MCF 10A (cell line): ENCODE measurements at regions of chr19 and their contacts with region 1.

Region 1: DNA sequence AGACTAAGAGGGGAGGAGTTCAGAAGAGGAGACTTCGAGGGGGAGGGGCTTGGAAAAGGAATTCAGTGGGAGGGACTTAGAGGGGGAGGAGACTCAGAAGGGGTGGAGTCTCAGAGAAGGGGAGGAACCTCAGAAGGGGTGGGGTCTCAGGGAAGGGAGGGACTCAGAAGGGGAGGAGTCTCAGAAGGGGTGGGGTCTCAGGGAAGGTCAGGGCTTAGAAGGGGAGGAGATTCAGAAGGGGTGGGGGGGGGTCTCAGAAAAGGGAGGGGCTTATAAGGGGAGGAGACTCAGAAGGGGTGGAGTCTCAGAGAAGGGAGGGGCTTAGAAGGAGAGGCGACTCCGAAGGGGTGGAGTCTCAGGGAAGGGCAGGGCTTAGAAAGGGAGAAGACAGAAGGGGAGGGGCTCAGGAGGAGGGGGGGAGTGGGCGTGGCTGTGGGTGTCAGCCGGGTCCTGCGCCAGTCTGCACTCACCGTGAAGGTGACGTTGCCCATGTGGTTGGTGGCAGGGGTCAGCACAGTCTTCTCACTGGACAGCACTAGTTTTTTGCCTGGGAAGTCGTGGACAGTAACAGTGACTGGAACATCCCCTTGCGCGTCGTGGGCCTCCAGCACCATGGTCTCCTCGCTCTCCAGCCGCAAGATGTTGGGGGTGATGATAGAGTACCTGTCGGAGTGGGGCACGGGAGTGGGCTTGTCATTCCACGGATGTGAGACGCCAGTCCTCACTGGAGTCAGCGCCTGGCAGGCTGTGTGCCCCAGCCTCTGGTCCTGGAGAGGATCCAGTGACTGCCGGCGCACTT is 1.5 kb downstream of the C3 start:
- DNase-seq: peak; percentile 92
- H3K4me3 Mint-ChIP-seq: peak overlapping the region; percentile 95
- H3K27ac Mint-ChIP-seq: peak overlapping the region; percentile 82
- H3K4me1 Mint-ChIP-seq: peaks cover 47% of the 10 kb centered on the region
- H3K27me3 Mint-ChIP-seq: no peaks in the 10 kb centered on the region
- CTCF ChIP-seq: no peak

Region 2: GRCh38 chr19:6593651-6594416 is 125.1 kb before region 1 on chr19:
- CTCF ChIA-PET with region 1: no interaction called
- POLR2A ChIA-PET with region 1: no interaction called
- intact Hi-C with region 1: no loop called
- DNase-seq: no peak
- H3K4me3 Mint-ChIP-seq: no peak overlapping the region
- H3K27ac Mint-ChIP-seq: no peak overlapping the region
- H3K4me1 Mint-ChIP-seq: peaks cover 19% of the 10 kb centered on the region
- H3K27me3 Mint-ChIP-seq: no peaks in the 10 kb centered on the region
- CTCF ChIP-seq: no peak

Region 3: GRCh38 chr19:6705931-6706632 is 12.9 kb before region 1 on chr19:
- CTCF ChIA-PET with region 1: no interaction called
- POLR2A ChIA-PET with region 1: interaction called, 10 read pairs
- intact Hi-C with region 1: no loop called
- DNase-seq: no peak
- H3K4me3 Mint-ChIP-seq: no peak overlapping the region
- H3K27ac Mint-ChIP-seq: peak overlapping the region; percentile 57
- H3K4me1 Mint-ChIP-seq: peaks cover 18% of the 10 kb centered on the region
- H3K27me3 Mint-ChIP-seq: no peaks in the 10 kb centered on the region
- CTCF ChIP-seq: no peak

Region 4: GRCh38 chr19:6737284-6738046 is 18.5 kb after region 1 on chr19 and contains the start of gene GPR108:
- CTCF ChIA-PET with region 1: interaction called, 9 read pairs
- POLR2A ChIA-PET with region 1: interaction called, 189 read pairs
- intact Hi-C with region 1: loop called (anchors 1 kb)
- DNase-seq: peak; percentile 100
- H3K4me3 Mint-ChIP-seq: peak within 1 kb of the TSS; percentile 88
- H3K27ac Mint-ChIP-seq: peak within 1 kb of the TSS; percentile 83
- H3K4me1 Mint-ChIP-seq: peaks cover 27% of the 10 kb centered on the region
- H3K27me3 Mint-ChIP-seq: no peaks in the 10 kb centered on the region
- CTCF ChIP-seq: no peak
- total RNA-seq, gene GPR108: 115 and 124 TPM in 2 replicates

Region 5: DNA sequence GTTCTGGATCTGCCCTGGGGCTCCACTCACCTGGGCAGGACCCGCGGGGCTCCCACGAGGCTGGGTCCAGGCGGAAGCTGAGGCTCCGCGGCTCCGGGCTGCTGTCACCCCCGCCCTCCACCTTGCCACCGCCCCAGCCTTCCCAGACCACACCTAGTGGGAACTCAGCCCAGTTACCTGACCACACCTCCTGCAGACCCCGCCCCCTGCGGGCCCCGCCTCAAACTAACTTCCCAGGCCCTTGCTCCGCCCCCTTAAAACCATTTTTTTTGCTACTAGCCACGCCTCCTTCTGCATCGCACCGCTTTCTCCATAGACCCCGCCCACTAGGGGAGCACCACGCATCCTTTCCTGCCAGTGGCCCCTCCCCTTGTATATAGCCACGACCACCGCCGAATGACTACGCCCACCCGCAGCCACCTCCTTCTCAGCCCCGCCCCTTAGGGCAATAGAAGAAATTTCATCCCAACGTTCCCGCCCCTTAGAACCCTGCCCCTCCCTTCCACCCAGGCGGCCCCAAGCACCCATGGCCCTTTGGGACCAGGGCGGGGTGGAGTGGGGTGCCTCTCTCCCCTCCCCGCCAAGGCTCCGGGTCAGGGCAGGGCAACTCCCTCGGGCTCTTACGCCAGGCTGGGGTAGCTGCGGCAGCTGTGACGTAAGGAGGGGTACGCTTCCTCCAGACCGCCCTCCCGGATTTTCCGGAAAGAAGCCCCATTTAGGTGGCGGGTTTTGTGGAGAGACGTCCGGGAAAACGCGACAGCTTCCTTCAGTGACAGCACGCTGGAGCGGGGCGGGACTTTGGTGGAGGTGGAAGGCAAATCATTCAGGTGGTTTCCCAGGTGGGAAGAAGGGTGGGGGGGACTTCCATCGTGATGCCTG is 48.7 kb after region 1 on chr19 and contains the start of gene SH2D3A:
- CTCF ChIA-PET with region 1: interaction called, 4 read pairs
- POLR2A ChIA-PET with region 1: interaction called, 25 read pairs
- intact Hi-C with region 1: no loop called
- DNase-seq: peak; percentile 96
- H3K4me3 Mint-ChIP-seq: peak within 1 kb of the TSS; percentile 76
- H3K27ac Mint-ChIP-seq: peak within 1 kb of the TSS; percentile 74
- H3K4me1 Mint-ChIP-seq: peaks cover 10% of the 10 kb centered on the region
- H3K27me3 Mint-ChIP-seq: no peaks in the 10 kb centered on the region
- CTCF ChIP-seq: no peak
- total RNA-seq, gene SH2D3A: 28.5 and 76.7 TPM in 2 replicates

Region 6: GRCh38 chr19:6811906-6812305 is 93.0 kb after region 1 on chr19:
- CTCF ChIA-PET with region 1: no interaction called
- POLR2A ChIA-PET with region 1: no interaction called
- intact Hi-C with region 1: no loop called
- DNase-seq: peak; percentile 75
- H3K4me3 Mint-ChIP-seq: no peak overlapping the region
- H3K27ac Mint-ChIP-seq: no peak overlapping the region
- H3K4me1 Mint-ChIP-seq: peaks cover 10% of the 10 kb centered on the region
- H3K27me3 Mint-ChIP-seq: peaks cover 18% of the 10 kb centered on the region
- CTCF ChIP-seq: no peak